PC-9 (cell line): ENCODE measurements at regions of chr1 and their contacts with region 1.

Region 1: GRCh38 chr1:200336111-200336845 is 73.6 kb downstream of the ZNF281 start:
- DNase-seq: peak; percentile 26 to 92
- H3K4me3 ChIP-seq: peak overlapping the region; percentile 8; the same call in 1 of the 2 replicates
- H3K27ac ChIP-seq: peak overlapping the region; percentile 92
- H3K4me1 ChIP-seq: peaks cover 43% of the 10 kb centered on the region
- H3K27me3 ChIP-seq: no peaks in the 10 kb centered on the region
- CTCF ChIP-seq: no peak

Region 2: GRCh38 chr1:200409761-200410565 is 73.7 kb after region 1 on chr1 and contains the start of gene ZNF281:
- CTCF ChIA-PET with region 1: no interaction called
- POLR2A ChIA-PET with region 1: no interaction called
- intact Hi-C with region 1: loop called (anchors 1 kb)
- DNase-seq: peak; percentile 83 to 95
- H3K4me3 ChIP-seq: peak within 1 kb of the TSS; percentile 77
- H3K27ac ChIP-seq: peak within 1 kb of the TSS; percentile 70
- H3K4me1 ChIP-seq: peaks cover 66% of the 10 kb centered on the region
- H3K27me3 ChIP-seq: no peaks in the 10 kb centered on the region
- CTCF ChIP-seq: no peak
- total RNA-seq, gene ZNF281: 14.8 and 18.8 TPM in 2 replicates